Lower lobe of right lung (tissue), 2 donors: ENCODE measurements at regions of chr1 and their contacts with region 1.

Region 1: DNA sequence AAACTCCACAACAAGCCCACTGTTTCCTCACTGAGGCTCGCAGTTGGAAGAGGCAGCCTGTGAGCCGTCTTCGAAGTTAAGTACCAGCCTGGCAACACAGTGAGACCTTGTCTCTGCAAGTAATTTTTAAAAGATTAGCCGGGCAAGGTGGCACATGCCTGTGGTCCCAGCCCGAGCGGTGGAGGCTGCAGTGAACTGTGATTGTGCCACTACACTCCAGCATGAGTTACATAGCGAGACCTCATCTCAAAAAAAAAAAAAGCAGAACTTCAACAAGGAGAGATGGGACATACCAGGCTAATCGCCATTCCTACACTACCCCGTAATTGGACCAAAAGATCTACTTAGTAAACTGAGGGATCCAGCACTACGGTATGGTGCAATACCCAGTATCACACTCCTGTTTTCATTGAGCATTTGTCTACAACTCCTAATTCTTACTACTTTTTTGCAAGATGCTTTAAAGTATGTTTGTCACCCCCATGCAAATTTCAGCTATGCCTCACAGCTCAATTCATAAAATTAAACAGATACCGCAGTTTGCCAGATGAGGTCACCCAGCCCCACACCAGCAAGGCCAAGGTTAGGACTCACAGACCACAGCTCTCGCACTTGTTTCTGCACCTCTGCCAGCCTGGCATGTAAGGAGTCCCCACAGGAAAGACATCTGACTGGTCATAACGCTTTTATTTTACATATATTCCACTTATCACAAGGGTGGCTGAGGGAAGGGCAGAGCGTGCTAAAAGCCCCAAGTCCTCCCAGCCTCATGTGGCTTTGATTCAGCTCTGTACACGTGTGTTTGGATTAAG is 21.0 kb downstream of the SDE2 start:
- DNase-seq: no peak
- ATAC-seq: no peak
- H3K4me3 ChIP-seq: no peak overlapping the region
- H3K27ac ChIP-seq: no peak overlapping the region
- H3K4me1 ChIP-seq: no peaks in the 10 kb centered on the region
- H3K27me3 ChIP-seq: no peaks in the 10 kb centered on the region
- CTCF ChIP-seq: no peak

Region 2: GRCh38 chr1:225474986-225475820 is 502.9 kb before region 1 on chr1:
- intact Hi-C with region 1: loop called (anchors 10 kb)
- DNase-seq: peak; percentile 80
- ATAC-seq: peak; percentile 92 to 97
- H3K4me3 ChIP-seq: peak overlapping the region; percentile 25
- H3K27ac ChIP-seq: no peak overlapping the region
- H3K4me1 ChIP-seq: peaks cover 10% of the 10 kb centered on the region
- H3K27me3 ChIP-seq: no peaks in the 10 kb centered on the region
- CTCF ChIP-seq: peak; percentile 100

Region 3: GRCh38 chr1:225794954-225795353 is 183.2 kb before region 1 on chr1:
- intact Hi-C with region 1: no loop called
- DNase-seq: no peak
- ATAC-seq: no peak
- H3K4me3 ChIP-seq: no peak overlapping the region
- H3K27ac ChIP-seq: no peak overlapping the region
- H3K4me1 ChIP-seq: no peaks in the 10 kb centered on the region
- H3K27me3 ChIP-seq: no peaks in the 10 kb centered on the region
- CTCF ChIP-seq: no peak